ENCODE measurements at regions of chr12 and their contacts with region 1.

Region 1: GRCh38 chr12:96578526-96579125 is 89.2 kb downstream of the CFAP54 start:
- DNase-seq: no peak
- H3K4me3 Mint-ChIP-seq: no peak overlapping the region
- H3K27ac Mint-ChIP-seq: no peak overlapping the region
- H3K4me1 Mint-ChIP-seq: no peaks in the 10 kb centered on the region
- H3K27me3 Mint-ChIP-seq: peaks cover 5% of the 10 kb centered on the region

Region 2: GRCh38 chr12:96327346-96327745 is 251.3 kb before region 1 on chr12:
- intact Hi-C with region 1: no loop called
- DNase-seq: no peak
- H3K4me3 Mint-ChIP-seq: no peak overlapping the region
- H3K27ac Mint-ChIP-seq: no peak overlapping the region
- H3K4me1 Mint-ChIP-seq: peaks cover 45% of the 10 kb centered on the region
- H3K27me3 Mint-ChIP-seq: no peaks in the 10 kb centered on the region

Region 3: GRCh38 chr12:96489103-96490056 is 89.2 kb before region 1 on chr12 and contains the start of gene CFAP54:
- intact Hi-C with region 1: no loop called
- DNase-seq: peak; percentile 92
- H3K4me3 Mint-ChIP-seq: peak within 1 kb of the TSS; percentile 86
- H3K27ac Mint-ChIP-seq: peak within 1 kb of the TSS; percentile 85
- H3K4me1 Mint-ChIP-seq: peaks cover 43% of the 10 kb centered on the region
- H3K27me3 Mint-ChIP-seq: peaks cover 25% of the 10 kb centered on the region
- total RNA-seq, gene CFAP54: 0.17 and 0.34 TPM in 2 replicates

Region 4: DNA sequence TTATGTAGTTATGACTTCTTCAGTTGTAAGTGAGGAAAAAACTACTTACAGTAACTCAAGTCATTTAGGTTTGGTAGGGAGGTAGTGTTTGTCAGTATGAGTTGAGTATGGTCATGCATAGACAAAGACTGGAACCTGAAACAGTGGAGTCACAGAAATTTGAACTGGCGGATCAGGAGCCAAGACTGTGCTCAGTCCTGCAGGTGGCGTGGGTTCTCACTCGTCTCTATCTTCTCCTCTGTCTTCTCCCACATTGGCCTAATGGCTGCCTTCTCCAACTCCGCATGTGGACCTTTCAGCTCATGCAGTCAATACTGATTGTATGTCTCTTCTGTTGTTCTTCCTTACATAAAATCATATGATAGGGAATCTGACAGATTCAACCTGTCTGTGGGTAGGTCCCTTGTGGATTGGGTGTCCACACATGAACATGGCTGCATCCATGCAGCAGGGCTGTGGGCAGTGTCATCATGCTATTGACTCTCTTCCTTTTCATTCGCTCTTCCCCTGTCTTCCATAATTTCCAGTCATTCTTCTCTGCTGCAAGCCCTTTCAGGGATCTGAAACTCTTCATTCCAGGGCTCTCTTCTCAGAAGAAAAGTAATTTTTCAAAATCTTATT is 249.7 kb after region 1 on chr12:
- intact Hi-C with region 1: loop called (anchors 10 kb)
- DNase-seq: no peak
- H3K4me3 Mint-ChIP-seq: no peak overlapping the region
- H3K27ac Mint-ChIP-seq: no peak overlapping the region
- H3K4me1 Mint-ChIP-seq: no peaks in the 10 kb centered on the region
- H3K27me3 Mint-ChIP-seq: no peaks in the 10 kb centered on the region

Region 5: GRCh38 chr12:96872961-96873360 is 294.3 kb after region 1 on chr12:
- intact Hi-C with region 1: no loop called
- DNase-seq: no peak
- H3K4me3 Mint-ChIP-seq: no peak overlapping the region
- H3K27ac Mint-ChIP-seq: no peak overlapping the region
- H3K4me1 Mint-ChIP-seq: no peaks in the 10 kb centered on the region
- H3K27me3 Mint-ChIP-seq: peaks cover 10% of the 10 kb centered on the region

Region 6: DNA sequence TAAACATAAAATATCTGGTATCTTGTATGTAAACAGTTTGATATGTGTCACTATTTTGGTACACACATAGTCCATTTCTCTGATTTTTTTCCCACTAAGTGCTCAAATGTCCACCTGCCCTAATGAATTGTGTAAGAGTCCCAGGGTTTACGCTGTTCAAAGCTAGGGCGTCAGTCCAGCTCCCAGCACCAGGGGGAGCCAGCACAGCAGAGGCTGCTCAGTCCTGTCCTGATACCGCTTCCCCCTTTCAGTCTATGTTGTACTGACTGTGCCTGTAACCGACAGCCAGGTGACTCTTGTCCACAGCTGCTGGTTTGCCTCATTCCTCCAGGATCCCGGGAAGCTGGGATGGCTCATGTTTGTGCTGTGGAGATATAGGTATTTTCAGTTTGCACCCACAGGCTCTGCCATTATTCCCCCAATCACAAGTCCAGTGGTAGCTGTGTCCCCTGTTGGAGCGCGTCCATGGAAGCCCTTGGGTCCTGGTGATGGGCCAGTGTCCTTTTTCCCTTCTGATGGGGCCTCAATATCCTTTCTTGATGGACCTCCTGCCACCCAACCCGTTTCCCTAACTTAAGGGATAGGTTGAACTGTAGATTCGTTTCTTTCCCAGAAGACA is 570.4 kb after region 1 on chr12:
- intact Hi-C with region 1: loop called (anchors 2 kb)
- DNase-seq: peak; percentile 7
- H3K4me3 Mint-ChIP-seq: no peak overlapping the region
- H3K27ac Mint-ChIP-seq: no peak overlapping the region
- H3K4me1 Mint-ChIP-seq: no peaks in the 10 kb centered on the region
- H3K27me3 Mint-ChIP-seq: peaks cover 13% of the 10 kb centered on the region

Region 7: GRCh38 chr12:97308576-97309198 is 730.1 kb after region 1 on chr12:
- intact Hi-C with region 1: loop called (anchors 1 kb)
- DNase-seq: no peak
- H3K4me3 Mint-ChIP-seq: no peak overlapping the region
- H3K27ac Mint-ChIP-seq: no peak overlapping the region
- H3K4me1 Mint-ChIP-seq: no peaks in the 10 kb centered on the region
- H3K27me3 Mint-ChIP-seq: peaks cover 6% of the 10 kb centered on the region

Region 8: DNA sequence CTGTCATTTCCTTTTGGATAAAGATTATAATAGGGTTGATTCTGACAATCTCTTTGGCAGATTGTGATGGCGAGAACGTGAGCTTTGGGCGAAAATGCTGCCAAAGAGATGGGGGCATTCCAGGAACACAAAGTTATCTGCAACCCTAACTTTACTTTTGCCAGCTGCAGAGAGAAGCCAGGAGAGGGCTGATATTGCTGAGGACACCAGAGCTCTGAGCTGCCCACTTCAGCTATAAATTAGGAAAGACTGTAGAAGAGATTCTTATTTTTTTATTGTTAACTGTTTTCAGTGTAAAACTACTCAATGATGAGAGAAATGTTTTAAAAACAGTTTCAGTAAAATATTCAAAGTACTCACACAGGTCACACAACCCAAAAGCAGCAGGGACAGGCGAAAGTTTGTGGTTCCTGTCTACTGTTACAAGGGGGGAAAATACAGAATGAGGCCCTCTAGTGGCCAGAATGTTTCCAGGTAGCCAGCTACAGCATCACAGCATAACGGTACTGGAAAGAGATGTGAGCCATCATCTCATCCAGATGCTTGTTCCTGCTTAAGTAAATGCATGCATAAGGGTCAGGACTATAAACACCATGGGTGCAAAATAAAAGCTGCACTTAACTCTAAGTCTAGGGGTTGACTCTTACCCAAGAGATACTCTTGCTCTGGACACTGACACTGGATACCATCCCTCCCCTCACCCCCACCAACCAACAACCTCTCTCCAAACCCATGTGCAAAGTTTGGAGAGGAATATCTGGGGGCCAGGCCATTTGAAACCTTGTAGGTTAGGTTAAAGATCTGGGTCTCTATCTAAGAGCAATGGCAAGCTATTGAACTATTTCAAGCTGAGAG is 1382.4 kb after region 1 on chr12:
- intact Hi-C with region 1: loop called (anchors 2 kb)
- DNase-seq: no peak
- H3K4me3 Mint-ChIP-seq: no peak overlapping the region
- H3K27ac Mint-ChIP-seq: no peak overlapping the region
- H3K4me1 Mint-ChIP-seq: no peaks in the 10 kb centered on the region
- H3K27me3 Mint-ChIP-seq: no peaks in the 10 kb centered on the region

Region 9: GRCh38 chr12:98397316-98398105 is 1818.9 kb after region 1 on chr12:
- intact Hi-C with region 1: loop called (anchors 1 kb)
- DNase-seq: peak; percentile 76
- H3K4me3 Mint-ChIP-seq: peak overlapping the region; percentile 77
- H3K27ac Mint-ChIP-seq: peak overlapping the region; percentile 53
- H3K4me1 Mint-ChIP-seq: peaks cover 38% of the 10 kb centered on the region
- H3K27me3 Mint-ChIP-seq: no peaks in the 10 kb centered on the region